Activated T-helper 1 cell treated with anti-CD3 and anti-CD28 coated beads, Interleukin-12 subunit alpha, Interleukin-12 subunit beta, Interleukin-2, Interleukin-4 antibody, amounts not matched to agents 30 ng/mL and 10 ng/mL and 1 ng/mL, durations not matched to agents 14 hours and 24 hours and 36 hours (primary cell): ENCODE measurements at regions of chr3 and their contacts with region 1.

Region 1: DNA sequence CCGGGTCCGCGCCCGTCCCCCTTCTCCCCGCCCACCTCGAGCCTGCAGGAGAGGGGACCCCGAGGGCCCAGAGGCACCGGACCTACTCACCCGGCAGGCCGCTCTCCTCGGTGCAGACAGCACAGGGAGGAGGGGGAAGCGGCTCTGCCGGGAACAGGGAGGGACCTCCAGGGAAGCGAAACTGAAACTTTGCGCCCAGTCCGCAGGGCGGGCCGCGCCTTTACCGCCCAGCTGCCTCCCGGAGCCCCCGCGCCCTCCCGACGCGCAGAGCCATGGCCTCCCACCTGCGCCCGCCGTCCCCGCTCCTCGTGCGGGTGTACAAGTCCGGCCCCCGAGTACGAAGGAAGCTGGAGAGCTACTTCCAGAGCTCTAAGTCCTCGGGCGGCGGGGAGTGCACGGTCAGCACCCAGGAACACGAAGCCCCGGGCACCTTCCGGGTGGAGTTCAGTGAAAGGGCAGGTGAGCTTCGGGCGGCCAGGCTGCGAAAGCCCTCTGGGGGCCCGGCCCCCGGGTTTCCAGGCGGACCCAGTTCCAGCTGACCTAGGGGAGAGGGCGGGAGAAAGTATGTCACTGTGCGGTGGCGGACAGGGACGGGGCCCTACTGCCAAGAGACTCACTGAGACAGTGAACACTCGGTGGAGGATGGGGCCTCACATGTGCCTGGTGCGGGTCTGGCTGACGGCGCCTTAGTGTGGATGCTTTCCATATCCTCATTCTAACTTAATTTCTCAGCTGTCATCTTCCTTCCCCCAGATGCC is at the starts of genes DTX3L and PARP9:
- DNase-seq: peak; percentile 87
- H3K4me3 Mint-ChIP-seq: peak within 1 kb of the TSS; percentile 99
- H3K27ac Mint-ChIP-seq: peak within 1 kb of the TSS; percentile 98
- H3K4me1 Mint-ChIP-seq: peaks cover 79% of the 10 kb centered on the region
- H3K27me3 Mint-ChIP-seq: no peaks in the 10 kb centered on the region
- total RNA-seq, gene DTX3L: 40.8 and 44.5 TPM in 2 replicates
- total RNA-seq, gene PARP9: 45.0 and 47.3 TPM in 2 replicates

Region 2: DNA sequence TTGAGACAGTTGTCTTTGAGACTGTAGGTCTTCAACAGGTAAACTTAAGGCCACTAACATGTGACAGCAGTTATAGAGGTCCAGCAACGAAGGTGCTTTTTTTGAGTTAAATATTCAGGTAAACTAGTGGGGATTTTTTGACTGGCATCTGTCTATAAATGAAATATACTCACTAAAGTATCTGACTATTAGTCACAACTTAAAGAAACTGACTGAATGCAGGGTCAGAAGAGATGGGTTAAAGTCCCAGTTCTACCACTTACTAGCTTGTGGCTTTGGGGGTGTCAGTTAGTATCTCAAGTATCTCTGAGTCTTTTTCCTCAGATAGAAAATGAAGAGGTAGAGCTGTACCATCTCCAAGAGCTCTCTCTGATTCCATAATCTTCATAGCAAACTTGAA is 199.3 kb before region 1 on chr3:
- intact Hi-C with region 1: no loop called
- DNase-seq: no peak
- H3K4me3 Mint-ChIP-seq: peak overlapping the region; percentile 42
- H3K27ac Mint-ChIP-seq: peak overlapping the region; percentile 91
- H3K4me1 Mint-ChIP-seq: peaks cover 47% of the 10 kb centered on the region
- H3K27me3 Mint-ChIP-seq: no peaks in the 10 kb centered on the region

Region 3: GRCh38 chr3:122392868-122393844 is 171.2 kb before region 1 on chr3:
- intact Hi-C with region 1: loop called (anchors 1 kb)
- DNase-seq: no peak
- H3K4me3 Mint-ChIP-seq: no peak overlapping the region
- H3K27ac Mint-ChIP-seq: no peak overlapping the region
- H3K4me1 Mint-ChIP-seq: peaks cover 46% of the 10 kb centered on the region
- H3K27me3 Mint-ChIP-seq: no peaks in the 10 kb centered on the region

Region 4: GRCh38 chr3:122514123-122515019 is 50.0 kb before region 1 on chr3 and contains the start of gene KPNA1:
- intact Hi-C with region 1: loop called (anchors 1 kb)
- DNase-seq: peak; percentile 85
- H3K4me3 Mint-ChIP-seq: peak within 1 kb of the TSS; percentile 90
- H3K27ac Mint-ChIP-seq: peak within 1 kb of the TSS; percentile 92
- H3K4me1 Mint-ChIP-seq: peaks cover 46% of the 10 kb centered on the region
- H3K27me3 Mint-ChIP-seq: peaks cover 4% of the 10 kb centered on the region
- total RNA-seq, gene KPNA1: 81.7 and 88.2 TPM in 2 replicates

Region 5: DNA sequence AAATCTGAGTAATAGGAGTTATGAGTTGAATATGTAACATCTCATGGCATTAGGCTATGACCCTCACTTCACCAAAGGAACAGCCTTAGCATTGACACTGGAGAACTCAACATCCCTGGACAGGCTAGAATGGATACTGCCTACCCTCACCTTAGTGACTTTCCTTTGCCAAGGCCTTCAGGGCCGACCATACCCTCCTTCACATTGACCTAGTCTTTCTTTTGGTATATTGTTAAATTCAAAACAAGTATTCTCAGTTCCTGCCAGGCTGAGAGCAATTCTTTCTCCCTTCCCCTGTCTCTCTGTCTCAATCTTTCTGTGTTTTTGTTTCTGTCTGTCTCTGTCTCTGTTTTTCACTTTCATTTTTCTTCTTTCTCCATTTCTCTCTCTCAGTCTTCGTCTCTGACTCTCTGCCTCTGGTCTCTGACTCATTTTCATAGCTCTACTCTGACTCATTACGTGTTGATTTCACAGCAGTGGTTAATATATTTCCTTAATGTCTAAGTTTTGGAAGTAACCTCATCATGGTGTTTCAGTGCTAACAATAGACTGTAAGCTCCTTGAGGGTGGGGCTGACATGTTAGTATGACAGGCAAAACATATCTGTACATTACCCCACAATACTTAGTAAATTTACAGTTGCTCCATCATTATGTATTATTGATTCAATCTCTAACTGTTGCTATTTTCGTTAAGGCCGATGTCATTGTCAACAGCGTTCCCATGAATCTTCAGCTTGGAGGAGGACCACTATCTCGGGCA is 45.6 kb after region 1 on chr3:
- intact Hi-C with region 1: loop called (anchors 1 kb)
- DNase-seq: peak; percentile 31
- H3K4me3 Mint-ChIP-seq: peak overlapping the region; percentile 58
- H3K27ac Mint-ChIP-seq: peak overlapping the region; percentile 89
- H3K4me1 Mint-ChIP-seq: peaks cover 20% of the 10 kb centered on the region
- H3K27me3 Mint-ChIP-seq: no peaks in the 10 kb centered on the region